ENCODE measurements at regions of chr3 and their contacts with region 1.

Region 1: DNA sequence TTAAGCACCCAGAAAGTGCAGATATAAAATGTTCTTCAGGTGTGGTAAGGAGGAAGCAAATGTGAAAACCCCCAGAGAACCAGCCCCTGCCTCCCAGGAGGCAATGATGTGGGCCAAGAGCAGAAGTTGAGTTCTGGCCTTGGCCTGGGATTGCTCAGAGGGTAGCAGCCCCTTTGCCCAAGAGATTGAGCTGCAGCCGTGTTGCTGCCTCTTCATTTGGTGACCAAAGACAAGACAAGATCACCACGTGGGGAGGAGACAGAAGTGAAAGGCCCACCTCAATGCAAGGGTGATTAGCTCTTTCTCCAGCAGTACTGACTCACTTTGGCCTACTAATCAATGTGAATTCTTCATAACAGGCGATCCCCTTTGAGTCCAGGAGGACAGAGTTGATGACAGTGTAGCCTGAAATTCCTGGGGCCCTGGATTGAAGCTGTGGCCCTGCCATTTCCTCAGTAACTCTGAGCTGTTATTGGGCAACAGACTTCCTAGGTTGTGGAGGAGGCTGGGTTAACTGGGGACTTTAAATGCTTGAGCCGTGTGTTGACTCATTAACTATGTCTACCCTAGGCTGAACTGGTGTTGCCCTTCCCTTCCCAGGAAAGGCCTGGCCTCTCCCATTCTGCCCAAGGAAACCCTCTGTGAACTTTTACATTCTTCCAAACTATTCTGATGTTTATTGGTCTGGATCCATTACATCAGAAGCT is 86.5 kb downstream of the ST6GAL1 start:
- DNase-seq: peak in 1 of 14 experiments; percentile 30
- ATAC-seq: no peak
- H3K4me3 ChIP-seq: no peak overlapping the region
- H3K4me3 Mint-ChIP-seq: peak overlapping the region; percentile 20
- H3K27ac ChIP-seq: no peak overlapping the region
- H3K27ac Mint-ChIP-seq: peak overlapping the region; percentile 82
- H3K4me1 ChIP-seq: peaks cover 71% of the 10 kb centered on the region
- H3K4me1 Mint-ChIP-seq: peaks cover 81% of the 10 kb centered on the region
- H3K27me3 ChIP-seq: no peaks in the 10 kb centered on the region
- H3K27me3 Mint-ChIP-seq: no peaks in the 10 kb centered on the region
- CTCF ChIP-seq: no peak

Region 2: DNA sequence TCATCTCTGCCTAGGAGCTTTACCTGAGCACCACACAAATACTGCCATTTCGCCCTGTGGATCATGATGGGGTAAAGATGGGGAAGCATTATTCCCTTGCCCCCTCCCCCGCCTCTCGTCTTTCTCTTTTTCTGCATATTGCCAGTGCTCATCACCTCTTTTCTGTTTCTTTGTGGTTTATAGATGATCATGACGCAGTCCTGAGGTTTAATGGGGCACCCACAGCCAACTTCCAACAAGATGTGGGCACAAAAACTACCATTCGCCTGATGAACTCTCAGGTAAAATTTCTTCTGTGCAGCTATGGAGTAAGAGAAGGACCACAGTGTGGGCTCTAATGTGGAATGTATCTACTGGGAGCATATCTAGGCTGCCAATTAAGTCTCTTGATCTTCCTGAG is 34.3 kb after region 1 on chr3:
- CTCF ChIA-PET with region 1: no interaction called
- POLR2A ChIA-PET with region 1: no interaction called
- intact Hi-C with region 1: no loop called
- DNase-seq: no peak
- ATAC-seq: peak; percentile 17
- H3K4me3 ChIP-seq: no peak overlapping the region
- H3K4me3 Mint-ChIP-seq: no peak overlapping the region
- H3K27ac ChIP-seq: peak overlapping the region; percentile 3 to 22
- H3K27ac Mint-ChIP-seq: peak overlapping the region; percentile 93
- H3K4me1 ChIP-seq: peaks cover 31% of the 10 kb centered on the region
- H3K4me1 Mint-ChIP-seq: peaks cover 82% of the 10 kb centered on the region
- H3K27me3 ChIP-seq: no peaks in the 10 kb centered on the region
- H3K27me3 Mint-ChIP-seq: no peaks in the 10 kb centered on the region
- CTCF ChIP-seq: no peak

Region 3: DNA sequence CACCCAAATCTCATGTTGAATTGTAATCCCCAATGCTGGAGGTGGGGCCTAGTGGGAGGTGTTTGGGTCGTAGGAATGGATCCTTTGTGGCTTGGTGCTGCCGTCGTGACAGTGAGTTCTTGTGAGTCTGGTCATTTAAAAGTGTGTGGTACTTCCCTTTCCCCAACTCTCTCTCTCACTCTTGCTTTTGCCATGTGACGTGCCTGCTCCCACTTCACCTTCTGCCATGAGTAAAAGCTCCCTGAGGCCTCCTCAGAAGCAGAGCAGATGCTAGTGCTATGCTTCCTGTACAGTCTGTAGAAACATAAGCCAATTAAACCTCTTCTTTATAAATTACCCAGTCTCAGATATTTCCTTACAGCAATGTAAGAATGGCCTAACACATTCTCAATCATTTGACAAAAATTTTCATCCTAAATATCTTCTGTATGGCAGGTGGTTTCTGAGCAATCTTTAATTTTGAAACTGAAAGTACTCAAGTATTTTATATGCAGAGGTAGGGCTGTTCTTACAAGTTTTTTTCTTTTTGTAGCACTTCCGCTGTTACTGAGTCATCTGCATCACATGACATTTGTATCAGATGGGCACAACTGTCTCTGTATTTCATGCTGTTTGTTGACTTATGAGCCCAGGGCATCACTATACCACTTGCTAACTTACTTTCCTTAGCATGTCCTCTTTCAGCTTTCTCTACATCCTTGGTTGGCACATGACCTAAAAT is 113.7 kb after region 1 on chr3:
- CTCF ChIA-PET with region 1: no interaction called
- POLR2A ChIA-PET with region 1: interaction called, 3 read pairs
- intact Hi-C with region 1: loop called in 1 of 2 experiments (anchors 1 kb)
- DNase-seq: peak in 9 of 14 experiments; percentile 10 to 93 (median 24)
- ATAC-seq: peak; percentile 96
- H3K4me3 ChIP-seq: peak overlapping the region; percentile 22
- H3K4me3 Mint-ChIP-seq: peak overlapping the region; percentile 46
- H3K27ac ChIP-seq: peak overlapping the region; percentile 82 to 94
- H3K27ac Mint-ChIP-seq: peak overlapping the region; percentile 93
- H3K4me1 ChIP-seq: peaks cover 21% of the 10 kb centered on the region
- H3K4me1 Mint-ChIP-seq: peaks cover 27% of the 10 kb centered on the region
- H3K27me3 ChIP-seq: no peaks in the 10 kb centered on the region
- H3K27me3 Mint-ChIP-seq: no peaks in the 10 kb centered on the region
- CTCF ChIP-seq: no peak

Region 4: GRCh38 chr3:188526057-188526456 is 1509.3 kb after region 1 on chr3:
- CTCF ChIA-PET with region 1: no interaction called
- POLR2A ChIA-PET with region 1: no interaction called
- intact Hi-C with region 1: no loop called
- DNase-seq: no peak
- ATAC-seq: no peak
- H3K4me3 ChIP-seq: no peak overlapping the region
- H3K4me3 Mint-ChIP-seq: no peak overlapping the region
- H3K27ac ChIP-seq: no peak overlapping the region
- H3K27ac Mint-ChIP-seq: no peak overlapping the region
- H3K4me1 ChIP-seq: no peaks in the 10 kb centered on the region
- H3K4me1 Mint-ChIP-seq: no peaks in the 10 kb centered on the region
- H3K27me3 ChIP-seq: no peaks in the 10 kb centered on the region
- H3K27me3 Mint-ChIP-seq: no peaks in the 10 kb centered on the region
- CTCF ChIP-seq: no peak